Gastrocnemius medialis (tissue), 4 donors: ENCODE measurements at regions of chr7 and their contacts with region 1.

Region 1: DNA sequence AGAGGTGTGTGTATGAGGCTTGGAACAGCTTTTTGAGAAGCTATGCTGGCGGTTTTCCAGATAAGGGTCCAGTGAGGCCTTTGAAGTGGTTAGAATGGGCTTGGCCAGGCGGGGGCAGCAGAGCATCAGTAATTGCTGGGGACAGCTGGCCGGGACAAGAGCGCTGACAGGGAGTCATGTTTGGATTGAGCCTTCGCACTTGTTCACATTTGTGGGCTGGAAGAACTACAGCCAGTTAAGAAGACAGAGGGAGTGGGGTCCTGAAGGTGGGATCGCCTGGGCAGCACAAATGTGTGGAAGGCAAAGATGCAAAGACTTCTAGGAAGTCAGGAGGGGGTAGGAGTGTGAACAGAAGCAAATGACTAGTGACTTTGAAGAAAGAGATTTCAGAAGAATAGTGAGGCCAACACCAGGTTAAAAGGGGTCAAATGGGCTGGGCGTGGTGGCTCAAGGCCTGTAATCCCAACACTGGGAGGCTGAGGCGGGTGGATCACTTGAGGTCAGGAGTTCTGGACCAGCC is 12.7 kb upstream of the SDHAF3 start:
- DNase-seq: peak; percentile 54 to 64
- ATAC-seq: peak; percentile 42 to 75
- H3K4me3 ChIP-seq: no peak overlapping the region
- H3K27ac ChIP-seq: no peak overlapping the region
- H3K4me1 ChIP-seq: no peaks in the 10 kb centered on the region
- H3K27me3 ChIP-seq: no peaks in the 10 kb centered on the region
- CTCF ChIP-seq: peak; percentile 68 to 83 (median 78)
- POLR2A ChIP-seq: no peak

Region 2: DNA sequence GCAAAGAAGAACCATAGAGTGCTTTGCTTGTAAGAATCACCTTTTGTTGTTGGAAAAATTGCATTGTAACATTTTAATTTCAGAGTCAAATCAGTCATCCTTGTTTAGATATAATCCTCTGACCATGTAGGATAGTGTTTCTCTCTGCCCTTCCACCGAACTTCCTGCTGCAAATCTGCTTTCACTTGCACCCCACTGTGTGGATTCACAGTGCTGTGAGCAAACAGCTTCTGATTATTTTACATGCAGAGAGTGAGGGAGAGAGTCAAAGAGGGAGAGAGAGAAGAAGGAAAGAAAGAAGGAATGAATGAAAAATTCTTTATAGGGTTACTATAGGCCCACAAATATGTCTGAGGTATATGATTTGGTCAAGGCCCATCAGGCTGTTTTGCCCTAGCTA is 365.2 kb before region 1 on chr7:
- in situ Hi-C with region 1: no loop called
- intact Hi-C with region 1: no loop called
- DNase-seq: no peak
- ATAC-seq: no peak
- H3K4me3 ChIP-seq: no peak overlapping the region
- H3K27ac ChIP-seq: no peak overlapping the region
- H3K4me1 ChIP-seq: no peaks in the 10 kb centered on the region
- H3K27me3 ChIP-seq: peaks cover 0 to 4% (median 0%) of the 10 kb centered on the region in 3 donors
- CTCF ChIP-seq: no peak
- POLR2A ChIP-seq: no peak

Region 3: DNA sequence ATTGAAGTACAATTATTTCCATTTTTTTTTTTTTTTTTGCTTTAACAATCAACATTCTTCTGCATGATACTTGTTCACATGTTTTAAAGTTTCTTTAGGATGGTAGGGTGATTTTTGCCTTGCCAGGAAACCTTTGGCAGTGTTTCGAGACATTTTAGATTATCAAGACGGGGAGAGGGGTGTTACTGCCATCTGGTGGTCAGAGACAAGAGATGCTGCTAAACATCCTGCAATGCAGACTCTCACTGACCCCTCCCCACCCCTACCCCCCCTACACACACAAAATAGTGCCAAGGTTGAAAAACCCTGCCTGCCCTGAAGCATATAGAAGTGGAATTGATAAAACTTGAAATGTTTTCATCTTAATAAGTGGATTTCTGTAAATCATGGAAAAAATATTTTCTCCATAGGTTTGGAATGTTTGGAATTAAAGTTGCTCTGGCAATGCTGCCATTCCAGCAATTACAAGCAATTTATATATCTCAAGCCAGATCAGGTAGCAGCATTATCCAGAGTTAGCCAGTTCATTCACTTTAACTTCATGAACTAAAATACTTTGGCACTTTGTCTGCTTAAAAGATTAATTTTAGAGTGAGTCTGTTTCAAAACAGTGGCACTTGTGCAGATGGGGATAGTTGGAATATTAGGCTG is 74.8 kb after region 1 on chr7:
- in situ Hi-C with region 1: loop called (anchors 5 to 10 kb)
- intact Hi-C with region 1: loop called (anchors 1 kb)
- DNase-seq: peak in 1 of 2 donors; percentile 3
- ATAC-seq: no peak
- H3K4me3 ChIP-seq: no peak overlapping the region
- H3K27ac ChIP-seq: no peak overlapping the region
- H3K4me1 ChIP-seq: no peaks in the 10 kb centered on the region
- H3K27me3 ChIP-seq: no peaks in the 10 kb centered on the region
- CTCF ChIP-seq: peak; percentile 42 to 79 (median 53)
- POLR2A ChIP-seq: no peak

Region 4: DNA sequence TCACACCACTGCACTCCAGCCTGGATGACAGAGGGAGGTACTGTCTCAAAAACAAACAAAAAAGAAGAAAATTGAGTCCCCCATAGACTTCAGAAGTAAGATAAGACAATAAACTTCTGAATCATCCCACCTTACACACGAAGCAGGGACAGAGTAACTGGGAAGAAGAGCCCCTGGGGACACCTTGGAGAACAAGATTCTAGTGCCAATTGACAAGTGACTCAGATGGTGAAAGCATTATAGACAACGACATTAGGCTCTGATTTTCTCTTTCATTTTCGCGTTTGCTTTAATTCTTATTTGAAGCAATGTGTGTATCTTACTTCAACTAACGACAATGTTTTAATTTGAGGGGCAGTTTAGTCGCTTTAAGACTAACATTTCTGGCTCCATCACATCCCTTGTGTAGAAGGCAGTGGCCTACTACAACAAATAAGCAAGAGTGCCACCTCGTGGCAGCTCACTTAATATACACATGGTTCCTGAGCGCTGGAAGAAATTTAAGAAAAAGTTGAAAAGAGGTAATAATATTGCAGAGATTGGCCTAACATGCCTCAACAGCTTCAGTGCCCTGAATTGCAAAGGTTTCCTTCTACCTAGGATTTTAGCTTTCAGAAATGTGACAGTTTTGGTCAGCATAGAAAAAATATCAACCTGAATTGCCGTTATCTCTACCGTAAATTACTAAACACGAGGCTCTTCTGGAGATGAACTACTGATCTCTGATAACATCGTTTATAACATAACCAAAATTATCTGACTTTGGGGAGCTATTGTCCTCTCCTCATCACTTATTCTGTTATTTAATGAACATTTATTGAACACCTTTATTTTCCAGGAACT is 730.7 kb after region 1 on chr7:
- in situ Hi-C with region 1: loop called (anchors 5 to 25 kb)
- intact Hi-C with region 1: loop called (anchors 1 kb)
- DNase-seq: peak in 1 of 2 donors; percentile 18
- ATAC-seq: no peak
- H3K4me3 ChIP-seq: no peak overlapping the region
- H3K27ac ChIP-seq: no peak overlapping the region
- H3K4me1 ChIP-seq: no peaks in the 10 kb centered on the region
- H3K27me3 ChIP-seq: peaks cover 0 to 3% (median 0%) of the 10 kb centered on the region in 3 donors
- CTCF ChIP-seq: peak in 3 of 5 experiments; percentile 25 to 60 (median 41)
- POLR2A ChIP-seq: no peak